CD4-positive, alpha-beta T cell (primary cell): ENCODE measurements at regions of chr10 and their contacts with region 1.

Region 1: DNA sequence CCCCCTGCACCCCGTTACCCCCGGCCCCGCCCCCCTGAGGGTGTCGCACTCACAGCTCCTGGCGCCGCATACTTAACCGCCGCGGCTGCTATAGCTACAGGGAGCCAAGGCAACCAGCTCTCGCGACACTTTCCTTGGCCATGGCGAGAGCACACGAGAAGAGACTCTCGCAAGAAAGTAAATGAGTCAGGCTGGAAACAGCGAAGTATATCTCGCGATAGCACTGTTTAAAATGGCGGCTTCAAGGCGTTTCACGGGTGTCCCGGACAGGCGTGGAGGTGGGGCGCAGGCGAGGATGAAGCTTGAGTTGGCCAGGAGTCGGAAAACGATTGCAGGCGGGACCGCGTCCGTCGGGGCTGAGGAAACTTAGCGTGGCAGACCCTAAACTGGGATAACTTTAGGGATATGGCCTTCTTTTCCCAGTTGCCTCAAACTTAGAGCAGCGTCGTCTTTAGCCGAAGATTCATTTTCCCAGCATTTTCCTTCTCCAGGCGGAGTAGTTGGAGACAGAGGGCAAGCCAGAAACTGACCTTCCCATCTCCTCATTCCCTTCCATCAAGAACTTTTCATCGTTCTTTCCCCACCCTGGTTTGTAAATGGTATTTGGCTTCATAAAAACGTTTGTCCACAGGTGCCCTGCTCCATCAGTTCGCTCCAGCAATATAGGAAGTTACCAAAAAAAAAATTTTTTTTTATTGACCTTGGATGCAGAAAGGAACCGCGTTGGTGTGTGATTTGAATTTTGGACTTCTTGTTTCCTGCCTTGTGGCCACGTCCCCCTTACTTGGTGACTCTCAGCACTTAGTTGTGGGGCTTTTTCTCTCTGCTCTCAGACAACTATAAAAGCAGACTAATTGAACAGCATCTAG is 15.2 kb downstream of the MYOZ1 start:
- DNase-seq: peak; percentile 84 to 99 (median 90)
- ATAC-seq: peak; percentile 94
- H3K4me3 ChIP-seq: peak overlapping the region; percentile 68
- H3K4me3 Mint-ChIP-seq: peak overlapping the region; percentile 91
- H3K27ac ChIP-seq: peak overlapping the region; percentile 62 to 66
- H3K27ac Mint-ChIP-seq: peak overlapping the region; percentile 90
- H3K4me1 ChIP-seq: peaks cover 17% of the 10 kb centered on the region
- H3K4me1 Mint-ChIP-seq: peaks cover 25% of the 10 kb centered on the region
- H3K27me3 ChIP-seq: no peaks in the 10 kb centered on the region
- H3K27me3 Mint-ChIP-seq: no peaks in the 10 kb centered on the region
- CTCF ChIP-seq: no peak

Region 2: DNA sequence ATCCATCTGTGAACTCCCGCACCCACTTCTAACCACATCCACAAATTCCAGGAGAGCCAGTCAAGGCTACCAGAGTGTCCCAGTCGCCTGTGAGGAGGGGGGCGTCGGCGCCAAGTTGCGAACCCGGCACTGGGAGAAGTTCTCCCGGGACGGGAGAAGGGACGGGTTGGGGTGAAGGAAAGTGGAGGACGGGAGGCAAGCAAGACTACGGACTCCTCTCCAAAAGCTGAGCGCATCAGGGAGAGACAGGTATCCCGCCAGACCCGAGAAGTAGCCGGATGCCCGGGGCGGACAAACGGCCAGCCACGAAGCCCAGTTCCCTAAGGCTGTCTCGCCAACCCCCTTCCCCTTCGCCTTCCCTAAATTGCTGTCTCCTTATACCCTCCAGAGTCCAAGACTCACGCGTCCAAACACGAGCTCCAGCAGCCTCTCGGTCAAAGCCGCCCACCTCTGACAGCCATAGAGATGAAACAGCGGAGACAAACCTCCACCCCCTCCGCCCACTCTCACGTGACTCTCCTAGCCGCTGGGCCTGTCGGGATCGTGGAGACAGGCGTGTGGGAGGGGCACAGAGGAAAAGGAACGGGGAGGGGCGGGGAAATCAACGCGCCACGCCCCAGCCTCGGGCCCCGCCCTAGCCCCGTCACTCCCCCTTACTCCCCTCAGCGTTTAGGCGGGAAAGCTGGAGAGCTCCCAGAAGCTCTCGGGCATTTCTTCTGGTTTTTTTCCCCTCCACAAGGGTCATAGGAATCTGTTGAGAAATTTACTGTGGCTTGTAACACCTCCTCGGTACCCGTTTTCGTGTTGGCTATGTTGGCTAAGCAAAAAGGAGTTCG is 1000.3 kb before region 1 on chr10 and contains the start of gene MICU1:
- CTCF ChIA-PET with region 1: no interaction called
- POLR2A ChIA-PET with region 1: no interaction called
- intact Hi-C with region 1: loop called in 1 of 2 experiments (anchors 5 kb)
- DNase-seq: peak; percentile 85 to 97 (median 92)
- ATAC-seq: peak; percentile 99
- H3K4me3 ChIP-seq: peak within 1 kb of the TSS; percentile 92
- H3K4me3 Mint-ChIP-seq: peak within 1 kb of the TSS; percentile 99
- H3K27ac ChIP-seq: peak within 1 kb of the TSS; percentile 15 to 42
- H3K27ac Mint-ChIP-seq: peak within 1 kb of the TSS; percentile 83
- H3K4me1 ChIP-seq: peaks cover 16% of the 10 kb centered on the region
- H3K4me1 Mint-ChIP-seq: peaks cover 26% of the 10 kb centered on the region
- H3K27me3 ChIP-seq: no peaks in the 10 kb centered on the region
- H3K27me3 Mint-ChIP-seq: no peaks in the 10 kb centered on the region
- CTCF ChIP-seq: no peak
- total RNA-seq, gene MICU1: 9.4 to 12.1 TPM

Region 3: DNA sequence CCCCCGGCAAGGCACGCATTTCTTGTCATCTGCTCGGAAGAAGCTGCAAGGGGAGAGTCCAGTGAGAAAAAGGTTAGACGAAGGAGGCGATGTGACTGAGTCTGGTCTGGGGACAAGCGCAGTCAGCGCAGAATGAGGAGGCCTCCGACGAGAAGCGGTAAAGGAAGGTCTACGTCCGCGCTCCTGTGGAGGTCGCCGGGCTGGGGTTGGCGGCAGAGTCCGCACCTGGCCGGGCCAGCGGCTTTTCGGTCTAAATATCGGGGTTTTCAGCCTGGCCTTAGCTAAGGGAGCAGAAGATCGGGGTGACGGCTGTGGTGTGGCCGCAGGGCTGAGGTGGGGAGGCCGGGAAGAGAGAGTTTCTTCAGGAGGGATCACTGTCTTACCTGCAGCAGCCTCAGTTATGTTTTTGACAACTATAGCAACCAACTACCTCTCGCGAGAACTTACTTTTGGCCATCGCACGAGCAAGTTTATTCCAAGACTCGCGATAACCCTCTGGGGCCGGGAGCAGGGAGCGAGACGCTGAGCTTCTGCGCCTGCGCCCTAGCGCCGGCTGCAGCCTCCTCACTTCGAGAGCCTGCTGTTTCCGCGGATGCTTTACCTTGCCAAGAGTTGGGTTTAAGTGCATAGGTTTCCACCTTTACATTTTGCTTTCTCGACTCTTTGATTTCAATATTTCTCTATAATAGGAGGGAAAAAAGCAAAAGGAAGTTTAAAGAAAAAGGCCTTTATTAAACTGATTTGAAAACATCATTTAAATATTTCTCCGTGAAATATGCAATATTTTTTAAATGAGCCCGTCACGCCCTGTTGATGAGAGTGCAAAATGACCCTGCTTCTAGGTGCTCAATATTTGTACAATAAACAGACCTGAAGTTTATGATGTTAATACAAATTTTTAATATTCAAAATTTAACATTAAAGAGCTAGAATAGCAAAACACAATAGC is 267.5 kb before region 1 on chr10 and contains the start of gene CFAP70:
- CTCF ChIA-PET with region 1: no interaction called
- POLR2A ChIA-PET with region 1: no interaction called
- intact Hi-C with region 1: loop called in 1 of 2 experiments (anchors 5 kb)
- DNase-seq: peak; percentile 85 to 98 (median 92)
- ATAC-seq: peak; percentile 98
- H3K4me3 ChIP-seq: peak within 1 kb of the TSS; percentile 82
- H3K4me3 Mint-ChIP-seq: peak within 1 kb of the TSS; percentile 98
- H3K27ac ChIP-seq: peak within 1 kb of the TSS; percentile 75 to 83
- H3K27ac Mint-ChIP-seq: peak within 1 kb of the TSS; percentile 95
- H3K4me1 ChIP-seq: peaks cover 7% of the 10 kb centered on the region
- H3K4me1 Mint-ChIP-seq: peaks cover 24% of the 10 kb centered on the region
- H3K27me3 ChIP-seq: no peaks in the 10 kb centered on the region
- H3K27me3 Mint-ChIP-seq: no peaks in the 10 kb centered on the region
- CTCF ChIP-seq: no peak
- total RNA-seq, gene CFAP70: 2.6 TPM

Region 4: DNA sequence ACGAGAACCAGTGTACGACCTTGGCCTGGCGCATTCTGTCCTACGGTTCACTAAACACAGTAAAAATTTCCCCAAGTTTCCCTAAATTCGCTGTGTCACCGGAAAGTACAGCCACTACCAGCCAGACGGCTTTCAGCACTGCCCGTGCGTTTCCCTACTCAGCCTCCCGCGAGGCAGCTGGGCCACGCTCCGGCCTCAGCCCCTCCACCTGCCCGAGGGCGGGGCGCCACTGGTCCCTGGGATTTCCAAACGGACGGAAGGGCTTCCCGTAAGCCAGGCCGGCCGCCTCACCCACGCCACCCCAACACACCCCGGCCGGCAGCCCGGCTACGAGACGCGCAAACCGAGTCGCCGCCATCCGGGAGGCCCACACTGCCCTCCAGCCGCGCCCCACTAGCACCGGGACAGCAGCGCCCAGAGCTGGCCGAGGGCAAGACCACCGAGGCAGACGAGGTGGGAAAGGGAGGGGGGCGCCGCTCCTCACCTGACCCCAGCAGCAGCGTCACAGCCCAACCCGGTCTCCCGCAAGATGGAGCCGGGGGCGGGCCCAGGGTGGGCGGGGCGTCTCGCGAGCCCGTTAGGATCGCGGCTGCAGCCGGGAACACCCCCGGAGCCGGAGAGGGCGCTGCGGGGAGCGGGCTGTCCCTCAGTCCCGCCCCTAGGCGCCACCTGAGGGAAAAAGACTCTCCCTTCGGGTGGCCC is 212.4 kb before region 1 on chr10 and contains the start of gene ANXA7:
- CTCF ChIA-PET with region 1: no interaction called
- POLR2A ChIA-PET with region 1: interaction called, 6 read pairs
- intact Hi-C with region 1: loop called in 1 of 2 experiments (anchors 10 kb)
- DNase-seq: peak; percentile 83 to 96 (median 92)
- ATAC-seq: peak; percentile 97
- H3K4me3 ChIP-seq: peak within 1 kb of the TSS; percentile 75
- H3K4me3 Mint-ChIP-seq: peak within 1 kb of the TSS; percentile 91
- H3K27ac ChIP-seq: peak within 1 kb of the TSS; percentile 86 to 98
- H3K27ac Mint-ChIP-seq: peak within 1 kb of the TSS; percentile 84
- H3K4me1 ChIP-seq: peaks cover 36% of the 10 kb centered on the region
- H3K4me1 Mint-ChIP-seq: peaks cover 57% of the 10 kb centered on the region
- H3K27me3 ChIP-seq: no peaks in the 10 kb centered on the region
- H3K27me3 Mint-ChIP-seq: no peaks in the 10 kb centered on the region
- CTCF ChIP-seq: peak; percentile 67
- total RNA-seq, gene ANXA7: 77.7 to 79.6 TPM

Region 5: GRCh38 chr10:73529089-73529832 is 96.9 kb before region 1 on chr10:
- CTCF ChIA-PET with region 1: no interaction called
- POLR2A ChIA-PET with region 1: no interaction called
- intact Hi-C with region 1: loop called in 1 of 2 experiments (anchors 5 kb)
- DNase-seq: peak in 13 of 14 experiments; percentile 2 to 82 (median 32)
- ATAC-seq: peak; percentile 95
- H3K4me3 ChIP-seq: no peak overlapping the region
- H3K4me3 Mint-ChIP-seq: no peak overlapping the region
- H3K27ac ChIP-seq: no peak overlapping the region
- H3K27ac Mint-ChIP-seq: no peak overlapping the region
- H3K4me1 ChIP-seq: no peaks in the 10 kb centered on the region
- H3K4me1 Mint-ChIP-seq: no peaks in the 10 kb centered on the region
- H3K27me3 ChIP-seq: no peaks in the 10 kb centered on the region
- H3K27me3 Mint-ChIP-seq: no peaks in the 10 kb centered on the region
- CTCF ChIP-seq: peak; percentile 88

Region 6: DNA sequence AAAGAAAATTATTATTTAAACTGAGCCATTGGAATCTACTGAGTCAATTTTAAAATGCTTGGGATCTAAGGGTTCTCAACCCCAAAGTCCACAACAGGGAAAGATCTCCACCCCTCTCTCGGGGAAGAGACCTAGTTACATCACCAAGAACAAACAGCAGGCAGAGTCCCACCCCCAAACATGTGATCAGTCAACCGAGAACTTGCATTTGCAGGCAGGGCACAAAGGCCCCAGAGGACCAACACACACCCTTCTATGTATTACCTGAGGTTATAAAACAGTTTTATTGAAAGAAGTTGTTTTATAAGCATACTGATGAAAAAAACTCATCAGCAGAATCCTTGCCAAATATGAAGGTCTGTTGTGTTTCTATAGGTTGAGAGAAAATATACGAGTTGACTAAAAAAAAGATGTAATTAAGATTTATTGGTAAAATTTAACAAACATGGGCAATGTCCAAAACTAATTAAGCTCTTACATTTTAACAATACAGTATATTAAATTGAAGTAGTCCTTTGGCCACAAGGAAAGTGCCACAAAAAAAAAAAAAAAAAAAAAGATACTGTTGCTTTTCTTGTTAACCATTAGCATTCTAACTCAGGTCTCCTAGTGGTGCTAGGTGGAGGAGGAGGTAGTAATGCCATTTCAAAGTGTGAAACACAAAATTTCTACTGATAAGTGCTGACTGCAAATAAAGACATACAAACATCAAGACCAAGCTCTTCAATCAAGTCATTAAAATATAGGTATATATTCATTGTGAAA is 34.0 kb before region 1 on chr10:
- CTCF ChIA-PET with region 1: interaction called, 5 read pairs
- POLR2A ChIA-PET with region 1: interaction called, 12 read pairs
- intact Hi-C with region 1: no loop called
- DNase-seq: peak in 9 of 14 experiments; percentile 1 to 47 (median 21)
- ATAC-seq: peak; percentile 54
- H3K4me3 ChIP-seq: no peak overlapping the region
- H3K4me3 Mint-ChIP-seq: peak overlapping the region; percentile 65
- H3K27ac ChIP-seq: peak overlapping the region in 1 of 2 donors; percentile 10
- H3K27ac Mint-ChIP-seq: peak overlapping the region; percentile 55
- H3K4me1 ChIP-seq: peaks cover 9% of the 10 kb centered on the region
- H3K4me1 Mint-ChIP-seq: peaks cover 23% of the 10 kb centered on the region
- H3K27me3 ChIP-seq: no peaks in the 10 kb centered on the region
- H3K27me3 Mint-ChIP-seq: no peaks in the 10 kb centered on the region
- CTCF ChIP-seq: no peak

Region 7: GRCh38 chr10:73653701-73654335 is 27.7 kb after region 1 on chr10:
- CTCF ChIA-PET with region 1: no interaction called
- POLR2A ChIA-PET with region 1: no interaction called
- intact Hi-C with region 1: no loop called
- DNase-seq: no peak
- ATAC-seq: no peak
- H3K4me3 ChIP-seq: no peak overlapping the region
- H3K4me3 Mint-ChIP-seq: no peak overlapping the region
- H3K27ac ChIP-seq: no peak overlapping the region
- H3K27ac Mint-ChIP-seq: no peak overlapping the region
- H3K4me1 ChIP-seq: no peaks in the 10 kb centered on the region
- H3K4me1 Mint-ChIP-seq: no peaks in the 10 kb centered on the region
- H3K27me3 ChIP-seq: peaks cover 0 to under 1% of the 10 kb centered on the region in 2 experiments
- H3K27me3 Mint-ChIP-seq: peaks cover 5% of the 10 kb centered on the region
- CTCF ChIP-seq: no peak

Region 8: GRCh38 chr10:73730153-73730906 is 104.2 kb after region 1 on chr10:
- CTCF ChIA-PET with region 1: no interaction called
- POLR2A ChIA-PET with region 1: interaction called, 3 read pairs
- intact Hi-C with region 1: loop called in 1 of 2 experiments (anchors 5 kb)
- DNase-seq: peak; percentile 78 to 94 (median 90)
- ATAC-seq: peak; percentile 90
- H3K4me3 ChIP-seq: peak overlapping the region; percentile 87
- H3K4me3 Mint-ChIP-seq: peak overlapping the region; percentile 98
- H3K27ac ChIP-seq: peak overlapping the region; percentile 77 to 86
- H3K27ac Mint-ChIP-seq: peak overlapping the region; percentile 94
- H3K4me1 ChIP-seq: peaks cover 27% of the 10 kb centered on the region
- H3K4me1 Mint-ChIP-seq: peaks cover 31% of the 10 kb centered on the region
- H3K27me3 ChIP-seq: no peaks in the 10 kb centered on the region
- H3K27me3 Mint-ChIP-seq: no peaks in the 10 kb centered on the region
- CTCF ChIP-seq: no peak